ENCODE measurements at regions of chr17 and their contacts with region 1.

Region 1: GRCh38 chr17:66165513-66166123 is 26.3 kb downstream of the CEP112 start:
- DNase-seq: no peak
- H3K4me3 ChIP-seq: no peak overlapping the region
- H3K27ac ChIP-seq: no peak overlapping the region
- H3K4me1 ChIP-seq: no peaks in the 10 kb centered on the region
- H3K27me3 ChIP-seq: no peaks in the 10 kb centered on the region
- CTCF ChIP-seq: peak; percentile 57 to 74 (median 68)

Region 2: DNA sequence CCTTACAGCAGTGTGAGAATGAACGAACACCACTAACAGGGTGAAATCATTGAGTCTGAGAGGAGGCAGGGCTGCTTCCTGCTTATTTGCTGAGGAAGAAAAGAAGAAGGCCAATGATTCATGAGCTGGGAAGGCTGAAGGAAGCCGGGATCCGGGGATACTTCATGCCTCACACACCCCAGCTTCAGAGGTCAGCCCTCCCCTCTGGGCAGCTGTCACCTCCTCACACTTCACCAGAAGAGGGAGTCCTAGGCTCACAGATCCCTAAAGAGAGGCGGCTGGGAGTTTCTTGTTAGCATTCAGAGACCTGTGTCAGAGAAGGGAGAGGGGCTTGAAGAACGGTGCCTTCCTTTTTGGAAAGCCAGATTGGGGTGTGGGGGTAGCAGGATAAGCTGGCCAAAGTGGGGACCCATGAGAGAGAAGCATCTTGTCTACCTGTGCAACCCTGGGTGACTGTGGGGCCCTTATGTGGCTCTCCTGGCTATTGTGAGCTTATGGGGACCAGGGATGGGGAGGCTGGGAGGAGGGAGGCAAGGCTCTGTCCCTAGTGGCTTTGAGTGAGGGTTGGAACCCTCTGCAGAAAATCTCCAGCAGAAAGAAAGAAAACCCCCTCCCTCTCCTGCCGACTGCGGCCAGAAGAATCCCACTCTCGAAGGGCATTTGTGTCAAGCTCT is 933.8 kb before region 1 on chr17:
- intact Hi-C with region 1: loop called (anchors 2 kb)
- DNase-seq: peak in 1 of 2 donors; percentile 70
- H3K4me3 ChIP-seq: no peak overlapping the region
- H3K27ac ChIP-seq: no peak overlapping the region
- H3K4me1 ChIP-seq: no peaks in the 10 kb centered on the region
- H3K27me3 ChIP-seq: no peaks in the 10 kb centered on the region
- CTCF ChIP-seq: peak; percentile 59 to 74 (median 59)

Region 3: GRCh38 chr17:65294179-65294720 is 871.4 kb before region 1 on chr17:
- intact Hi-C with region 1: loop called (anchors 5 kb)
- DNase-seq: peak in 1 of 2 donors; percentile 71
- H3K4me3 ChIP-seq: no peak overlapping the region
- H3K27ac ChIP-seq: no peak overlapping the region
- H3K4me1 ChIP-seq: peaks cover 0 to 3% of the 10 kb centered on the region in 2 donors
- H3K27me3 ChIP-seq: no peaks in the 10 kb centered on the region
- CTCF ChIP-seq: peak; percentile 64 to 84 (median 69)

Region 4: DNA sequence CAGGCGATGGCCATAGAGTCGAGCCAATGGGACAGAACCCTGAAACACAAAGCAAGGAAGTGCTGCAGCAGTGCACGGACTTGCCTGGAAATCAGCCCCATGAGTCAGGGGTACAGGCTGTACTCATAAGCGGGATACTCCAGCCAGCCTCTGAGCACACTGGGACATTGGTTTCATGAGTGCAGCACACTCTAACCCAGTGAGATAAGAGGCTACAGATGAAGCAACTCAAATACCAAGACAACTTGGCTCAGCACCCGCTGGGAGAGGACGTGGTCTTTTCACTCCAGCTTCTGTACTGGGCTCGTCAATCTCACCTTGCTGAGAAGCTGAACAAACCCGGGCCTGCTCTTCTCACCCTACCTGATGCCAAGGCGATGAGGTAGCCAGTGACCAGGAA is 702.4 kb before region 1 on chr17:
- intact Hi-C with region 1: loop called (anchors 10 kb)
- DNase-seq: peak; percentile 71 to 93
- H3K4me3 ChIP-seq: no peak overlapping the region
- H3K27ac ChIP-seq: peak overlapping the region; percentile 68 to 73
- H3K4me1 ChIP-seq: peaks cover 4 to 18% of the 10 kb centered on the region in 2 donors
- H3K27me3 ChIP-seq: no peaks in the 10 kb centered on the region
- CTCF ChIP-seq: no peak

Region 5: GRCh38 chr17:66063686-66064085 is 101.9 kb before region 1 on chr17:
- intact Hi-C with region 1: no loop called
- DNase-seq: no peak
- H3K4me3 ChIP-seq: no peak overlapping the region
- H3K27ac ChIP-seq: no peak overlapping the region
- H3K4me1 ChIP-seq: no peaks in the 10 kb centered on the region
- H3K27me3 ChIP-seq: no peaks in the 10 kb centered on the region
- CTCF ChIP-seq: no peak

Region 6: GRCh38 chr17:66143657-66144282 is 21.8 kb before region 1 on chr17:
- intact Hi-C with region 1: no loop called
- DNase-seq: no peak
- H3K4me3 ChIP-seq: no peak overlapping the region
- H3K27ac ChIP-seq: no peak overlapping the region
- H3K4me1 ChIP-seq: no peaks in the 10 kb centered on the region
- H3K27me3 ChIP-seq: no peaks in the 10 kb centered on the region
- CTCF ChIP-seq: no peak